ENCODE measurements at regions of chr6 and their contacts with region 1.

Region 1: GRCh38 chr6:79233611-79234149 is 802 bp downstream of the HMGN3 start:
- DNase-seq: peak; percentile 81 to 92
- ATAC-seq: peak; percentile 87 to 90
- H3K4me3 ChIP-seq: peak overlapping the region; percentile 72 to 91 (median 79)
- H3K27ac ChIP-seq: peak overlapping the region; percentile 91 to 96 (median 92)
- H3K4me1 ChIP-seq: peaks cover 13 to 21% of the 10 kb centered on the region in 2 donors
- H3K27me3 ChIP-seq: no peaks in the 10 kb centered on the region
- CTCF ChIP-seq: peak; percentile 31 to 66 (median 53)
- POLR2A ChIP-seq: peak; percentile 71 to 73

Region 2: GRCh38 chr6:78867370-78868040 is 366.2 kb before region 1 on chr6 and contains the start of gene IRAK1BP1:
- in situ Hi-C with region 1: no loop called
- intact Hi-C with region 1: loop called (anchors 5 kb)
- DNase-seq: peak; percentile 23 to 64
- ATAC-seq: peak; percentile 88 to 95
- H3K4me3 ChIP-seq: peak within 1 kb of the TSS; percentile 73 to 94 (median 76)
- H3K27ac ChIP-seq: peak within 1 kb of the TSS; percentile 34 to 64 (median 52)
- H3K4me1 ChIP-seq: peaks cover 7 to 8% of the 10 kb centered on the region in 2 donors
- H3K27me3 ChIP-seq: no peaks in the 10 kb centered on the region
- CTCF ChIP-seq: no peak
- POLR2A ChIP-seq: no peak
- total RNA-seq, gene IRAK1BP1: 0.75 to 1.8 (median 1.0) TPM

Region 3: DNA sequence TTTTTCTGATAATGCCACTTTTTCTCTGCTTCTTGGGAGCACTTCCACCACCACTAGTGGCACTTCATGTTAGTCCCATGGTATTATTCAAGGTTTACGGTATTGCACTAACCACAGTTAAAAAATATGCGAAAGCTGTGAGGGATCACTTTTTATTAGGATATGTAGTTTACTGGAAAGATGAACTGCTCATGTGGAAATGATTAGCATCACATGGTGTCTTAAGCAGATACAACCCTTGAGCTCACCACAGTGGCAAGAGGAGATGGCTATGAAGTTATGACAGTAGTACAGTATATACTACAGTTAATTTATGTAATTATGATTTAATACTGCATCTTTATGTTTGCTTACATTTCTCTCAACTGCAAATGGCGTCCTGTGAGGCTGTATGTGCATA is 135.3 kb after region 1 on chr6:
- in situ Hi-C with region 1: no loop called
- intact Hi-C with region 1: no loop called
- DNase-seq: no peak
- ATAC-seq: no peak
- H3K4me3 ChIP-seq: no peak overlapping the region
- H3K27ac ChIP-seq: no peak overlapping the region
- H3K4me1 ChIP-seq: no peaks in the 10 kb centered on the region
- H3K27me3 ChIP-seq: no peaks in the 10 kb centered on the region
- CTCF ChIP-seq: no peak
- POLR2A ChIP-seq: no peak

Region 4: GRCh38 chr6:79536954-79537747 is 303.5 kb after region 1 on chr6 and contains the start of gene LCA5:
- in situ Hi-C with region 1: loop called in 3 of 4 experiments (anchors 25 kb)
- intact Hi-C with region 1: loop called (anchors 5 kb)
- DNase-seq: peak; percentile 94 to 95
- ATAC-seq: peak; percentile 99
- H3K4me3 ChIP-seq: peak within 1 kb of the TSS; percentile 76 to 99 (median 91)
- H3K27ac ChIP-seq: peak within 1 kb of the TSS; percentile 85 to 93 (median 88)
- H3K4me1 ChIP-seq: peaks cover 3 to 19% of the 10 kb centered on the region in 2 donors
- H3K27me3 ChIP-seq: no peaks in the 10 kb centered on the region
- CTCF ChIP-seq: no peak
- POLR2A ChIP-seq: peak in 1 of 2 donors; percentile 63
- total RNA-seq, gene LCA5: 0.92 to 3.0 (median 1.2) TPM

Region 5: GRCh38 chr6:80106418-80107235 is 872.9 kb after region 1 on chr6 and contains the start of gene BCKDHB:
- in situ Hi-C with region 1: no loop called
- intact Hi-C with region 1: loop called (anchors 10 kb)
- DNase-seq: peak; percentile 98 to 99
- ATAC-seq: peak; percentile 99 to 100
- H3K4me3 ChIP-seq: peak within 1 kb of the TSS; percentile 80 to 83 (median 81)
- H3K27ac ChIP-seq: peak within 1 kb of the TSS; percentile 87 to 93 (median 88)
- H3K4me1 ChIP-seq: peaks cover 11 to 14% of the 10 kb centered on the region in 2 donors
- H3K27me3 ChIP-seq: no peaks in the 10 kb centered on the region
- CTCF ChIP-seq: no peak
- POLR2A ChIP-seq: peak; percentile 87 to 92
- total RNA-seq, gene BCKDHB: 1.6 to 6.9 (median 4.8) TPM

Measured in gastrocnemius medialis (tissue), 4 donors.